Right ventricle myocardium superior (tissue), 1 donor: ENCODE measurements at regions of chr5 and their contacts with region 1.

Region 1: GRCh38 chr5:170183816-170184687 is 48.7 kb upstream of the C5orf58 start:
- DNase-seq: peak; percentile 69
- ATAC-seq: peak; percentile 93

Region 2: GRCh38 chr5:170100066-170100943 is 83.7 kb before region 1 on chr5:
- intact Hi-C with region 1: loop called (anchors 1 kb)
- DNase-seq: peak; percentile 63
- ATAC-seq: peak; percentile 81